ENCODE measurements at regions of chr10 and their contacts with region 1.

Region 1: DNA sequence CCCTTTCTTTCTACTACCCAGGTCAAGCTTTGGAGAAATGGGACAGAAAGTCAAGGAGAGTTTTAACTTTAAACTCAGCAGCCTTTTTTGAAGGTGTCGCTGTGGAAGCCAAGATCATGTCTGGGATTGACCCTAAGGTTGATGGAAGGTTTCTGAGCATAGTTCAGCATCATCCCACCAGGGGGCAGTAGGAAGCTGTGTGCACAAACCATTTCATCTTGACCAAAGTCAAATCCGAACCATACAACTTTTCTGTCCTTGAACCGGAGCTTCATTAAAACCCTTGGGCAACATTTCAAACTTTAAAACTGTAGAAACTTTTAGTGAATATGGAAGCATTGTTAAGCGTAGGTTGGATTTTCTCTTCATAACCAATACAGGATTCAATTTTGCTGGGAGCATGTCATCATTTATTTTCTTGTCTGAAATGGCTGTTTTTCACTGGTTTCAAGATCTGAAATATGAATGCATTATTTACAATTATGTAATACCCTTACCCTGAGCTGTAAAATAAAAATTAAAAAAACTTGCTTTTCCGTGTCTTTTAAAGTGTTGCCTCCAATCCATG is 214.4 kb upstream of the KIAA1217 start:
- DNase-seq: peak; percentile 51
- CTCF ChIP-seq: peak; percentile 71

Region 2: GRCh38 chr10:23146258-23146657 is 848.3 kb before region 1 on chr10:
- in situ Hi-C with region 1: no loop called
- DNase-seq: no peak
- CTCF ChIP-seq: no peak

Region 3: DNA sequence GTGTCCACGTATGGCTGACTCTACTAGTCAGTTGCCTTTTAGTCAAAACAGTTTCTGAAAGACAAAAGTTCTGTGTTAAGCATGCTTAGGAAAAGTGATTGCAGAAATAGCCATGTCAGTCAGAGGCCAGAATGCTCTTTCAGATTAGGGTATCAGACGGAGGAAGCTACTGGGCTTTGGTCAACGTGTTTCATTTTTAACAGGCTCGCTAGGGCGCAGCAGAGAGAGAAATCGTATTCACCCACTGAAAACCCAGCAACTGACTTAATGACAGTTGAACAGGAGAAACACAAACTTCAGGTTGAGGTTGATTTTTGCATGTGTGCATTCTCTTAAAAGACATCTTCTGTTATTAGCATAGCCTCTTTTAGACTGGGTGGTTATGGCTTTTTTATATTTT is 108.2 kb before region 1 on chr10:
- in situ Hi-C with region 1: no loop called
- DNase-seq: no peak
- CTCF ChIP-seq: no peak

Region 4: DNA sequence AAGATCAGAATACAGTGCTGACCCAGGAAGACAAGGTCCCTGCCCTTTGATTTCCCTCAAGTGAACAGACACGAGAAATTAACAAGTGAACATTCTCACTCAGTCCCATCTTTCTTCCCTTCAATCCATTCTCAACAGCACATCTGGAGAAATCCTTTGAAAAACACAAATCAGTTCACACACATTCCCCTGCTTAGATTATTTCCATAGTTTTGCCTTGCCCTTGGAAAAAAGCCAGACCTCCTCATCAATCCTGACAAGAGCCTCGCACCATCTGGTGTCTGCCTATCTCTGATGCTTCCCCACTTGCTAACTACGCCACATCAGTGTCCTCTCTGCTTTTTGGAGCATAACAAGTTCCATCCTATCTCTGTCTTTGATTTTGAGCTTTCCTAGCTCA is 120.0 kb after region 1 on chr10:
- in situ Hi-C with region 1: no loop called
- DNase-seq: no peak
- CTCF ChIP-seq: no peak

Region 5: GRCh38 chr10:24197263-24197662 is 202.7 kb after region 1 on chr10:
- in situ Hi-C with region 1: loop called (anchors 25 kb)
- DNase-seq: no peak
- CTCF ChIP-seq: no peak

Region 6: GRCh38 chr10:24360282-24361127 is 365.9 kb after region 1 on chr10:
- in situ Hi-C with region 1: loop called (anchors 10 kb)
- DNase-seq: peak; percentile 59
- CTCF ChIP-seq: peak; percentile 66

Region 7: GRCh38 chr10:24503461-24504320 is 509.1 kb after region 1 on chr10:
- in situ Hi-C with region 1: loop called (anchors 10 kb)
- DNase-seq: peak; percentile 64
- CTCF ChIP-seq: peak; percentile 62

Measured in GM13976 (cell line).